SK-N-SH (cell line): ENCODE measurements at regions of chr1 and their contacts with region 1.

Region 1: GRCh38 chr1:89632657-89633247 is at the start of gene LRRC8C:
- DNase-seq: peak; percentile 95
- H3K4me3 ChIP-seq: peak within 1 kb of the TSS; percentile 95
- H3K27ac ChIP-seq: peak within 1 kb of the TSS; percentile 66 to 88
- H3K4me1 ChIP-seq: peaks cover 12% of the 10 kb centered on the region in 2 experiments
- H3K27me3 ChIP-seq: no peaks in the 10 kb centered on the region
- CTCF ChIP-seq: peak; percentile 27
- EP300 ChIP-seq: no peak
- RAD21 ChIP-seq: peak; percentile 63
- polyA plus RNA-seq, gene LRRC8C: 4.2 and 5.2 TPM in 2 replicates

Region 2: GRCh38 chr1:89179343-89179742 is 453.4 kb before region 1 on chr1:
- CTCF ChIA-PET with region 1: no interaction called
- POLR2A ChIA-PET with region 1: no interaction called
- DNase-seq: no peak
- H3K4me3 ChIP-seq: no peak overlapping the region
- H3K27ac ChIP-seq: no peak overlapping the region
- H3K4me1 ChIP-seq: no peaks in the 10 kb centered on the region
- H3K27me3 ChIP-seq: no peaks in the 10 kb centered on the region
- CTCF ChIP-seq: no peak
- EP300 ChIP-seq: no peak
- RAD21 ChIP-seq: no peak

Region 3: DNA sequence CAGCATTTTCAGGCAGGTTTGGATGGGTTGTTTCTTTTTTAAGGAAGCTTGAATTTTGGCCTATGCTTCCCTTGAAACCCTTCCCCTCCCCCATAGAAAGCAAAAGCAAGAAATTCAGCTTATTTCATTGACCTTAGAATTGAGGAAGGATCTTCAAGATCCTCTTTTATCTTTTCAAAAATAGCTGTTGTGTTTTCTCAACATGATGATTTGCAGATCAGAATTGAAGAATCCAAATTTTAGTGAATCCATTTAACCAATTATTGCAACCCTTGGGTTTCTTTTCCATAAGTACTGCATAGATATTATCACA is 73.9 kb after region 1 on chr1:
- CTCF ChIA-PET with region 1: no interaction called
- POLR2A ChIA-PET with region 1: no interaction called
- DNase-seq: no peak
- H3K4me3 ChIP-seq: no peak overlapping the region
- H3K27ac ChIP-seq: no peak overlapping the region; a peak in 1 of 4 replicates
- H3K4me1 ChIP-seq: peaks cover 6 to 9% of the 10 kb centered on the region in 2 experiments; a peak in 3 of 4 replicates
- H3K27me3 ChIP-seq: no peaks in the 10 kb centered on the region
- CTCF ChIP-seq: no peak
- EP300 ChIP-seq: no peak
- RAD21 ChIP-seq: no peak

Region 4: DNA sequence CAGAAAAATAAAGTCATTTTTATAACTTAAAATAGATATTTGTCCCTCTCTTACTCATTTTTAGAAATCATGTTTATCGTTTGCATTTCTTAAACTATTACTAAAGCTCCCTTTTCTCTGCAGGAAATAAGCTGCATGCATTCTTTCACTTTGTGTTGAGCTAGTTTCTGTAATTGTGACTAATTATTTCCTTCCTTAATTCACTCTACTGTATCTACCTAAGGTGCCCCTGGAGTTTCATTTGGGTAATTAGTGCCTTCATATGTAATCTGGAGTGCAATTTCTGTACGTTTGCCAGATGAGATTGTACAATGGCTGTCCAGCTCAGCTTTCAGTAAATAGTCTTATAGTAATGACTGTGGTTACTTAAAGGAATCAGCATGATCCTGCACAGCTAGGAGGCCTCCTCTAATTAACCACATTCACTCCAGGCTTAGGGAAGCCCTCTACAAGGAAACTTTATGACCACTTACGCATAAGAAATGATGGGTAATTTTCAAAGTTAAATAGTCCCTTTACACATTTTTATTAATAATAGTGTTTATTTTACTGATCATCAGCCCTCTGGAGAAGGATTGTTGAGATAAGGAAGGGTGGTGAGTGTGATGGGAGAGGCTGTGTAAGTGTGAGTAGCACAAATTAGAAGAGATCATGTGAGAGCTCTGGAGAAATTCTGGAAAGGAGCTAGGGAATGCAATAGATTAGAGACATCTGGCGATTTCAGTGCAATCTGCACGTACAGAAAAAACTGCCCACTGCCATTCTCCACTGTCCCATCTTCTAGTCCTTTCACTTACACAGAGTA is 87.0 kb after region 1 on chr1:
- CTCF ChIA-PET with region 1: interaction called, 10 read pairs
- POLR2A ChIA-PET with region 1: interaction called, 3 read pairs
- DNase-seq: peak; percentile 41
- H3K4me3 ChIP-seq: no peak overlapping the region
- H3K27ac ChIP-seq: peak overlapping the region; percentile 4 to 58; a peak in 3 of 4 replicates
- H3K4me1 ChIP-seq: peaks cover 27 to 41% of the 10 kb centered on the region in 2 experiments
- H3K27me3 ChIP-seq: no peaks in the 10 kb centered on the region
- CTCF ChIP-seq: no peak
- EP300 ChIP-seq: 0 out of 4 replicates have a peak, but pooled peaks of 1 of the 2 experiments have one; percentile 26
- RAD21 ChIP-seq: peak; percentile 24